Gastrocnemius medialis (tissue), 4 donors: ENCODE measurements at regions of chr12 and their contacts with region 1.

Region 1: DNA sequence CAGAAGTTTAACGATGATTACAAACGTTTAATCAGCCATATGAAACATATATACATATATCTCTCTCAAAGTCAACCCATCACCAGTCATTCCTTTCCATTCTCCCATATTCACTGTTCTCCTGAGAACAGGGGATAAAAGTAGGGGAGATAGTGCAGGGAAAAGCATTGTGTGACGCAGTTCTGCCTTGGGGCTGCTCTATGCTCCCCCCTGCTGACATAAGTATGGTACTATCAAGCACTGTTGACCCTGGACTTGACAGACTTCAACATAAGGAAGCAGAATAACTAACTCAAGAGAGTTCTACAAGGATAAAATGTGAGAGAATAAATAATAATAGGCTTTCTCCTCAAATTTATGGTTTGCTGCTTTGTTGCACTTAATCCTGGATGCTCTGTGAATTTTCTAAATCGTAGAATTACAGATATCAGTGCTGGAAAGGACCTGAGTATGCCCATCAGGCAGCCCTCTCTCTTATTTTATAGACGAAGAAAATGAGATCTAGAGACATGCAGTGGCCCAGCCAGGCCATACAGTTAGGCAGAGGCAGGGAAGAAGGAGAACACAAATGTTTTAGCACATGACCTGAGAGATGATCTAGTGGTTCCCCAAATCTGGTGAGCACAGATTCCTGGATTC is 87.2 kb downstream of the SCN8A start:
- DNase-seq: no peak
- ATAC-seq: peak; percentile 65 to 82
- H3K4me3 ChIP-seq: peak overlapping the region in 2 of 4 donors; percentile 14 to 23
- H3K27ac ChIP-seq: no peak overlapping the region
- H3K4me1 ChIP-seq: no peaks in the 10 kb centered on the region
- H3K27me3 ChIP-seq: no peaks in the 10 kb centered on the region
- CTCF ChIP-seq: peak in 3 of 5 experiments; percentile 6 to 57 (median 29)
- POLR2A ChIP-seq: no peak

Region 2: GRCh38 chr12:51601241-51601640 is 77.0 kb before region 1 on chr12:
- in situ Hi-C with region 1: no loop called
- intact Hi-C with region 1: no loop called
- DNase-seq: no peak
- ATAC-seq: no peak
- H3K4me3 ChIP-seq: no peak overlapping the region
- H3K27ac ChIP-seq: no peak overlapping the region
- H3K4me1 ChIP-seq: no peaks in the 10 kb centered on the region
- H3K27me3 ChIP-seq: peaks cover 2 to 6% (median 3%) of the 10 kb centered on the region in 3 donors
- CTCF ChIP-seq: no peak
- POLR2A ChIP-seq: no peak

Region 3: GRCh38 chr12:51639361-51639760 is 38.8 kb before region 1 on chr12:
- in situ Hi-C with region 1: no loop called
- intact Hi-C with region 1: no loop called
- DNase-seq: no peak
- ATAC-seq: no peak
- H3K4me3 ChIP-seq: no peak overlapping the region
- H3K27ac ChIP-seq: no peak overlapping the region
- H3K4me1 ChIP-seq: no peaks in the 10 kb centered on the region
- H3K27me3 ChIP-seq: no peaks in the 10 kb centered on the region
- CTCF ChIP-seq: no peak
- POLR2A ChIP-seq: no peak

Region 4: GRCh38 chr12:51788876-51789275 is 110.7 kb after region 1 on chr12:
- in situ Hi-C with region 1: loop called in 1 of 4 experiments (anchors 25 kb)
- intact Hi-C with region 1: no loop called
- DNase-seq: no peak
- ATAC-seq: no peak
- H3K4me3 ChIP-seq: no peak overlapping the region
- H3K27ac ChIP-seq: no peak overlapping the region
- H3K4me1 ChIP-seq: no peaks in the 10 kb centered on the region
- H3K27me3 ChIP-seq: peaks cover 0 to 4% (median 0%) of the 10 kb centered on the region in 3 donors
- CTCF ChIP-seq: no peak
- POLR2A ChIP-seq: no peak